Ovary (tissue), 10 donors: ENCODE measurements at regions of chr21 and their contacts with region 1.

Region 1: DNA sequence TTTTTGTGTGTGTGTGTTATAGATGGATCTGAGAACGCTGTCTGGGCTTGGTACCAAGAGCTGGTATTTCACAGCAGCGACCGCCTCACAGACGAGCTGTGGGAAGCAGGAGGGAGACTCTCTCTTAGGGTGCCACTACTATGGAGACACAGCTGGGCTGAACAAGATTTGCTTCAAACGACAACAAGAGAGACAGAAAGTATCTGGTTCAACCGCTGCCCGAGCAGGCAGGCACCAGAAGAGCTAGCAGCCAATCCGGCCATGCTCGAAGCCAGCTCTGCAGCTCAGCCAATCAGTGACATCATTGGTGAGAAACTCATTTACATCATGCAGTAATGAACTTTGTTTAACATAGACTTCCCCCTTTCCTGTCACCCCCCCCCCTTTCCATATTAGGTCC is 341.3 kb downstream of the USP25 start:
- DNase-seq: peak; percentile 21 to 45 (median 35)
- H3K4me3 ChIP-seq: peak overlapping the region; percentile 36
- H3K27ac ChIP-seq: no peak overlapping the region
- H3K4me1 ChIP-seq: no peaks in the 10 kb centered on the region
- H3K27me3 ChIP-seq: no peaks in the 10 kb centered on the region
- CTCF ChIP-seq: no peak
- EP300 ChIP-seq: no peak
- POLR2A ChIP-seq: no peak

Region 2: DNA sequence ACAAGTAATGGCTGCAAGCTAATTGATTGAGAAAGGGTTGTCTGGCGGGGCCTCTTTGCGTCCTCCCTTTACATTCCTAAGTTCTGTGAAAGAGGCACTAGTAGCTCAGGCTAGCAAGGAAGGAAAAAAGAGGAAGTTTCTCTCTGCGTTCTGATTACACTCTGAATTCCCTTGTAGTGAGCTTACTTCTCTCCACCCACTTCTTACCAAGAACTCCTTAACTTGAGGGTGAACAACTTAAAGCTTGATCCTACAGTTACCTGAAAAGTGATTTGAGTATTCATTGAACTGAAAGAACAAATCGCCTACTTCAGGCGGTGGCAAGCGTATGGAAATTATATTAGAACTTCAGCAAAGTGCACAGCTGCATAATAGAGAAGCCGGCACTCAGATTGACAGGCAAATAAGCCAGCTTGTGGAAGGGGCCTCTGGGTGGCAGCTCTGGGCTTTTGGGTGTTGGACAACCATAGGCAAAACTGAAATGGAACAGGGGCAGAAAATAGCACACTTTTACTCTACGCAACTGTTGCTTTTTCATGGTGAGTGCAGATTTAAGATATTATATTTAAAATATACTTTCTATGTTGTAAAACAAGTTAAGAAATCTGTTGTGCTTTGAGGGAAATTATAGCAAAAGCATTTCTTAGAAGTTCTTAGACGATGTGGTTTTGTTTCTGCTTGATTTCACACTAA is 123.1 kb after region 1 on chr21:
- intact Hi-C with region 1: no loop called
- DNase-seq: peak; percentile 59 to 71 (median 67)
- H3K4me3 ChIP-seq: peak overlapping the region; percentile 46
- H3K27ac ChIP-seq: peak overlapping the region; percentile 35 to 84
- H3K4me1 ChIP-seq: no peaks in the 10 kb centered on the region
- H3K27me3 ChIP-seq: no peaks in the 10 kb centered on the region
- CTCF ChIP-seq: no peak
- EP300 ChIP-seq: no peak
- POLR2A ChIP-seq: peak; percentile 9

Region 3: GRCh38 chr21:16330082-16330907 is 259.2 kb after region 1 on chr21:
- intact Hi-C with region 1: loop called in 2 of 4 experiments (anchors 10 kb)
- DNase-seq: no peak
- H3K4me3 ChIP-seq: peak overlapping the region; percentile 17
- H3K27ac ChIP-seq: peak overlapping the region in 1 of 2 donors; percentile 36
- H3K4me1 ChIP-seq: no peaks in the 10 kb centered on the region
- H3K27me3 ChIP-seq: no peaks in the 10 kb centered on the region
- CTCF ChIP-seq: peak; percentile 17 to 70 (median 67)
- EP300 ChIP-seq: no peak
- POLR2A ChIP-seq: no peak